ENCODE measurements at regions of chr4 and their contacts with region 1.

Region 1: DNA sequence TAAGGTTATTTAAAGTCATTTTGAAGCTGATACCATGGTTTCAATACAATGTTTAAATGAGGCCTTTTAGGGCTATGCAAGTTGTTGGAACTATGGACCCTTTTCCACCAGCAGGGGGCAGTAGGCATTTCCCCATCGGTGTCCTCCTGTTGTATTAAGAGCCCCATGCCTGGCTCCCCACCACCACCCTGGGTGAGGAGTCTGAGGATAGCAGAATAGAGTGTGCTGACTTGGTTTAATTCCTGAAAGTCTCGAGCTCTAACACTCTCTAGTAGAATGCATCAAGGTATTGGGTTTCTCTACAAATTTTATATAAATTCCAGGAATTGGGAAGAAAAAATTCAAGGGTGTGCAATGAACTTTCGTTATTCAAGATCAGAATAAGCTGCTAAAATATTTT is 234.8 kb upstream of the JADE1 start:
- DNase-seq: peak; percentile 81 to 94
- H3K4me3 ChIP-seq: no peak overlapping the region
- H3K27ac ChIP-seq: no peak overlapping the region
- H3K4me1 ChIP-seq: peaks cover 0 to 7% (median under 1%) of the 10 kb centered on the region in 4 experiments; a peak in 2 of 7 replicates
- H3K27me3 ChIP-seq: no peaks in the 10 kb centered on the region
- CTCF ChIP-seq: peak; percentile 64 to 84 (median 80)
- EP300 ChIP-seq: no peak
- POLR2A ChIP-seq: no peak
- RAD21 ChIP-seq: peak; percentile 92 to 96

Region 2: DNA sequence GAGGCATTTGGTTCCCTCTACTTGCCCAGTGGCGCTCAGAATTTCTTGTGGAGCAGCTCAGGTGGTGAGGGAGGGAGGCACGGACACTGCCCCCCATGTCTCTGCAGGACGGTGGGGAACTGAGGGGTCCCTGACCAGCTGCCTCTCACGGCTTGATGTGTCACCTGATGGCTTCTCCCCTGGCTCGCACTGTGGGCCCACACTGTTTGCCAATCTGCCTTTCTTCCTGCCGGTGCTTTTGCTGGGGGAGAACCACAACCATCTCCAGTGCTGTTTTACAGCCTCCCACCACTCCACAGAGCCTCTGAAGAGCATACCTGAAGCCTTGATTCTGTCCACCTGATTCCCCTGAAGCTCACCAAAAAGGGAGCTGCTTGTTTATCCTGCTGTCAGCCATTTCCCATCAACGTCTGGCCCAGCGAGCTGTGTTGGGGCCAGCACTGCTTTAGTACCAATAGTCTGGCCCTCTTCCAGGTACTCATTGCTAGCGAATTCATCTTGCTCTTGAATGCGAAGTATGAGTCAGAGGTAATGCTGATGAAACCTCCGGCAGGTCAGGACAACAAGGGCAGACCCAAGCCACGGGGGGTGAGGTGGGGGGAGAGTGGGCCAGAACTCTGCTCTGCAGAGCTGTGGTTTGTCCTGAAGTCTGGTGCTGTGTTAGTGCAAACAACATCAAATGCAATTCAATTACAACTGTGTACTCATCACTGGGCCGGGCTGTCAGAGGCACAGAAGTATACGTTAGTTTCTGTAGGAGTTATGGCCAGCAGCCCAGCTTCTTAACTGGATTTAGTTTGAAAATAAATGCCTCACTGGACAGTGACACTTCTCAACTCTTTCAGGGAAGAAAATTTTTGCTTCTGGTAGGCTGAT is 26.5 kb after region 1 on chr4:
- CTCF ChIA-PET with region 1: interaction called, 18 read pairs
- POLR2A ChIA-PET with region 1: no interaction called
- DNase-seq: peak; percentile 40 to 44
- H3K4me3 ChIP-seq: no peak overlapping the region
- H3K27ac ChIP-seq: no peak overlapping the region
- H3K4me1 ChIP-seq: peaks cover 0 to 5% (median under 1%) of the 10 kb centered on the region in 4 experiments; a peak in 3 of 7 replicates
- H3K27me3 ChIP-seq: no peaks in the 10 kb centered on the region
- CTCF ChIP-seq: no peak
- EP300 ChIP-seq: no peak
- POLR2A ChIP-seq: no peak
- RAD21 ChIP-seq: no peak

Region 3: DNA sequence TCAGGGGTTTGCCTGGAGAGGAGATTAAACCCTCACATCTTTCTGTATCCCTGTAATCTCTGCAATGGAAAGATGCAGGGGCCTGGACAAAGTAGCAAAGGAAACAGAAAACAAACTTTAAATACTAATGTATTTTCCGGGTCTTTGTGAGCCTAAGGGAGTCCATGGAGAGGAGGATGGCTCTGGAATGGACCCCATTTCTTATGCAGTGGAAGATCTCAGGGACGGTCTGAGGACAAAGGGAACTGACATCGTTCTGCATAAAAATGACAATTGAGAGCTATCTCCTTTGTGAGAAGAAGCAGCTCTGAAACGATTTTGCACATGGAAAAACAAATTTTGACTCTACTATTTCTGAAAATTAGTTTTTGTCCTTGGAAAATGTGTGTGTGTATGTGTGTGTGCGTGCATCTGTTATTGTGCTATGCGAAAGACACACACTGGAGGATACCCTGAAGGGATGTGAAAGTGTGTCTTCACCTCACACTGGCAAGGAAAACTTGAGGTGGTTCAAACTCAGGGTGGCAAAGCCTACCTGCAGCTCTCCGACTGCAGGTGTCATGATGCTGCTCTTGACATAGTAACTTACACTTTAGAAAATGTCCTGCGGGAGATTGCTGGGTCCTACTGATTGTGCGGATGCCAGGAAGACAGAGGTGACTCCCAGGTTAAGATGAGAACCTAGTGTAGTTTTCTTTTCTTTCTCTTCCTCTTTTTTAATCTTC is 108.4 kb after region 1 on chr4:
- CTCF ChIA-PET with region 1: interaction called, 11 read pairs
- POLR2A ChIA-PET with region 1: interaction called, 6 read pairs
- DNase-seq: peak; percentile 52 to 57
- H3K4me3 ChIP-seq: peak overlapping the region in 3 of 4 experiments; percentile 2 to 37 (median 9); a peak in 4 of 8 replicates
- H3K27ac ChIP-seq: peak overlapping the region; percentile 80
- H3K4me1 ChIP-seq: peaks cover 3 to 19% (median 14%) of the 10 kb centered on the region in 4 experiments; a peak in 5 of 7 replicates
- H3K27me3 ChIP-seq: no peaks in the 10 kb centered on the region
- CTCF ChIP-seq: 0 out of 4 replicates have a peak, but pooled peaks of 1 of the 3 experiments have one; percentile 14
- EP300 ChIP-seq: no peak
- POLR2A ChIP-seq: peak in 1 of 2 experiments; percentile 46; a peak in 1 of 3 replicates
- RAD21 ChIP-seq: peak; percentile 16 to 28; a peak in 2 of 4 replicates

Region 4: DNA sequence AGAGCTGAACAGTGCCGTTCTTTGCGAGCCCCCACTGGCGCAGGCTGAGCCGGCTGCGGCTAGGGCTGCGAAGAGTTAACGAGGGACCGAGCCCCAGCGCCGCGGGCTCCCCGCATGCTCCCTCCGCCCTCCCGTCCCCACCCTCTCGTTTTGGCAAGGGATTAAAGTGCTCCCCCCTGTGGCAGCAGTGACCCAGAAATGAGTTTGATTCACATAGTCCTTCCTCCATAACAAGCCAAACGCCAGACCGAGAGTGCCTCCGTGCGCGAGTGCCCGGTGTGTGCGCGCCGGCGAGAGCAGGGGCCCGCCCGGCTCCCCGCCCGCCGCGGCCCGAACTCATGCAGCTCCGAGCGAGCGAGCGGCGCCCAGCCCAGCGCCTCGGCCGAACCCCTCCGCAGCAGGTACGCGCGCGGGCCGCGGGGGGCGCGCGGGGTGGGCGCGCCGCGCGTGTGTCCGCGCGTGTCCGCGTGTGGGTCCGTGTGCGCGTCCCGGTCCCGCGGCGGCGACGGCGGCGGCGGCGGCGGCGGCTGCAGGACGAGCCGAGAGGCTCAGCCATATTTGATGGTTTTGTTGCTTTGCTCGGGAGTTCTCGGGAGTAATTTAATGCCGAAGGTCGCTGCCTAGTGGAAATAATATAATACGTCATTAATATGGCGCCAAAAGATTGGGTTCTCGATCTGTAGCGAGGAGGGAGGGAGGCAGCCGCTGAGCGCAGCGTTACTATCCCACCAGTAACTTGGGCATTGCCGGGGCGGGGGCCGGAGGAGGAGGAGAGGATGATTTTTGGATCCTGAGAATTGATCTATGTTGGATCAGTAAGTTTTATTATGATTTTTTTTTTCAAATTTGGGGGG is 235.0 kb after region 1 on chr4 and contains the start of gene JADE1:
- CTCF ChIA-PET with region 1: interaction called, 23 read pairs
- POLR2A ChIA-PET with region 1: interaction called, 12 read pairs
- DNase-seq: peak; percentile 82 to 92
- H3K4me3 ChIP-seq: peak within 1 kb of the TSS; percentile 92 to 99 (median 97)
- H3K27ac ChIP-seq: peak within 1 kb of the TSS; percentile 97
- H3K4me1 ChIP-seq: peaks cover 2 to 10% (median 4%) of the 10 kb centered on the region in 4 experiments; a peak in 5 of 7 replicates
- H3K27me3 ChIP-seq: no peaks in the 10 kb centered on the region
- CTCF ChIP-seq: peak; percentile 62 to 86 (median 72)
- EP300 ChIP-seq: peak in 1 of 2 experiments; percentile 79; a peak in 1 of 3 replicates
- POLR2A ChIP-seq: peak; percentile 71 to 87
- RAD21 ChIP-seq: peak; percentile 85 to 87
- total RNA-seq, gene JADE1: 213 and 216 TPM in 2 replicates

Region 5: GRCh38 chr4:128831531-128832242 is 257.0 kb after region 1 on chr4:
- CTCF ChIA-PET with region 1: interaction called, 12 read pairs
- POLR2A ChIA-PET with region 1: interaction called, 4 read pairs
- DNase-seq: no peak
- H3K4me3 ChIP-seq: peak overlapping the region in 1 of 4 experiments; percentile 35; a peak in 2 of 8 replicates
- H3K27ac ChIP-seq: 0 out of 2 replicates have a peak overlapping the region, but pooled peaks have one; percentile 20
- H3K4me1 ChIP-seq: peaks cover 15 to 50% (median 38%) of the 10 kb centered on the region in 4 experiments
- H3K27me3 ChIP-seq: no peaks in the 10 kb centered on the region
- CTCF ChIP-seq: no peak
- EP300 ChIP-seq: no peak
- POLR2A ChIP-seq: no peak
- RAD21 ChIP-seq: no peak